ENCODE measurements at regions of chr7 and their contacts with region 1.

Region 1: GRCh38 chr7:115924411-115924810 is 106.2 kb downstream of the TFEC start:
- DNase-seq: no peak
- ATAC-seq: no peak
- H3K4me3 ChIP-seq: no peak overlapping the region
- H3K27ac ChIP-seq: no peak overlapping the region
- H3K4me1 ChIP-seq: no peaks in the 10 kb centered on the region
- H3K27me3 ChIP-seq: no peaks in the 10 kb centered on the region
- CTCF ChIP-seq: no peak

Region 2: DNA sequence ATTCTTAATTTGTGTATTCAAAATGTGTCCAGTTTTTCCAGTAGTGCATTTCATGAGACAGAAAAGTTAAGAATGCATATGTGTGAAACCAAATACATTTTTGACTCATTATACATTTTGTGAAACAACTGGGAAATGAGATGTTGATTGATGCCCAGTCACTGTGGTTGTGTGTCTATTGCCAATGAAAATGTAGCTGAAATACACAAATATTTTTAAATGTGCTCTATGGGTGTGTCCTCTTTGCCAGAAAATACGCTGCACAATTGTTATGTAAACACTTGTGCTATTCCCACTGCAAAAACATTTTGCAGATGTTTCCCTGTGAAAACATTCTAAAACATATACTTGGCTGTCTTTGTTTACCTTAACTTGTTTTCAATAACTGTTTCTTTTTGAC is 289.0 kb before region 1 on chr7:
- CTCF ChIA-PET with region 1: no interaction called
- POLR2A ChIA-PET with region 1: interaction called, 14 read pairs
- in situ Hi-C with region 1: no loop called
- intact Hi-C with region 1: no loop called
- DNase-seq: no peak
- ATAC-seq: no peak
- H3K4me3 ChIP-seq: no peak overlapping the region
- H3K27ac ChIP-seq: no peak overlapping the region
- H3K4me1 ChIP-seq: no peaks in the 10 kb centered on the region
- H3K27me3 ChIP-seq: no peaks in the 10 kb centered on the region
- CTCF ChIP-seq: no peak

Region 3: GRCh38 chr7:115996911-115997615 is 72.7 kb after region 1 on chr7:
- CTCF ChIA-PET with region 1: no interaction called
- POLR2A ChIA-PET with region 1: no interaction called
- in situ Hi-C with region 1: no loop called
- intact Hi-C with region 1: no loop called
- DNase-seq: no peak
- ATAC-seq: no peak
- H3K4me3 ChIP-seq: no peak overlapping the region
- H3K27ac ChIP-seq: no peak overlapping the region
- H3K4me1 ChIP-seq: no peaks in the 10 kb centered on the region
- H3K27me3 ChIP-seq: no peaks in the 10 kb centered on the region
- CTCF ChIP-seq: no peak